AG04450 (cell line): ENCODE measurements at regions of chr3 and their contacts with region 1.

Region 1: GRCh38 chr3:179071550-179072397 is at the start of gene ZMAT3:
- DNase-seq: peak; percentile 54
- H3K4me3 ChIP-seq: peak within 1 kb of the TSS; percentile 90
- H3K27ac ChIP-seq: peak within 1 kb of the TSS; percentile 84
- H3K27me3 ChIP-seq: no peaks in the 10 kb centered on the region
- CTCF ChIP-seq: no peak
- polyA plus RNA-seq, gene ZMAT3: 46.2 and 51.9 TPM in 2 replicates

Region 2: DNA sequence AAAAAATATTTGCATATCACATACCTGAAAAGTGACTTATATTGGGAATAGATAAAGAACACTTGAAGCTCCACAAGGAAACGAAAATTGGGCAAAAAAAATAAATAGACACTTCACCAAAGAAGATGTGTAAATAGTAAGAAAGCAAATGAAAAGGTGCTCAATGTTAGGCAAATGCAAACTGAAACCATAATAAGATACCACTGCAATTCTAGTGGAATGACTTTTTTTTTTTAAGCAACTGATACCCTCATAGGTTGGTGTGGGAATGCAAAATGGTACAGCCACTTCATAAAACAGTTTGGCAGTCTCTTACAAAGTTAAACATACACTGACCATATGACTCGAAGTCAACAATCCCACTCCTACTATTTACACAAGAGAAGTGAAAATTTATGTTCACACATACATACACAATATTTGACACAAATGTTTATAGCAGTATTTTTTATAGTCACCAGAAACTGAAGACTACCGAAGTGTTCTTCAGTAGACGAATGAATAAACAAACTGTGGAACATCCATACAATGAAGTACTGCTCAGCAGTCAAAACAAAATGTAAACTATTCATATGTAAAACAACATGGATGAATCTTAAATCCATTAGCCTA is 176.5 kb before region 1 on chr3:
- CTCF ChIA-PET with region 1: no interaction called
- POLR2A ChIA-PET with region 1: no interaction called
- DNase-seq: no peak
- H3K4me3 ChIP-seq: no peak overlapping the region
- H3K27ac ChIP-seq: no peak overlapping the region
- H3K27me3 ChIP-seq: no peaks in the 10 kb centered on the region
- CTCF ChIP-seq: no peak

Region 3: GRCh38 chr3:179083977-179084376 is 12.2 kb after region 1 on chr3:
- CTCF ChIA-PET with region 1: interaction called, 11 read pairs
- POLR2A ChIA-PET with region 1: no interaction called
- DNase-seq: no peak
- H3K4me3 ChIP-seq: no peak overlapping the region
- H3K27ac ChIP-seq: no peak overlapping the region
- H3K27me3 ChIP-seq: no peaks in the 10 kb centered on the region
- CTCF ChIP-seq: no peak